ENCODE measurements at regions of chr10 and their contacts with region 1.

Region 1: DNA sequence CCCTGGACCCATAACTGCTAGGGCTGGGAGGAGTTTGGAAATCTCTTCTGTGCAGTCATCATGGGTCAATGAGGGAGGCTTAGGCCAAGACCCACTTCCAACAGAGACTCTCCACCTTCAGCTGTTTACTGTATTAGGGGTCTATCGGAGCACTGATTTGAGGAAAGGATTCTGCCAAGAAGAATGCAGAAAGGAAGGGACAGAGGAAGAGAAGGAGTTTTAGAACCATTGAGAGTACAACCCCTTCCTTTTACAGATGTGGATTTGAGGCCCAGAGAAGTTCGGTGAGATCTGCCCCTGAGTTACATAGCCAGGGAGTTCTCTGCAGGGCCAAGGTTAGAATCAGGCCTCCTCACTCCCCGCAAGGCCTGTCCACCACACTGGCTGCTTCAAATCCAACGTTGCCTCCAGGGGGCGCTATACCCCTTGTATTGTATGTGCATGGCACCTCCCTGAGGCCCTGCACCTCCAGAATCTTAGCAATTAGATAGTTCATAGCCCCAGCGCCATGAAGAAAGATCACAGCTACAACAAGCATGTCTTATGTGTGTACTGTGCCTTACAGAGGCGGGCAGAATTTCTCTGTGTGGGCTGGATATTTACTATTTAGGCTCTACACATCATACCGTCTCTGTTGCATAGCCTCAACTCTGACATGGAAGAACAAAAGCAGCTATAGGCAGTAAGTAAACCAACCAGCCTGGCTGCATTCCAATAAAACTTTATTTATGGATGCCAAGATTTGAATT is 246.8 kb downstream of the SKIDA1 start:
- DNase-seq: peak; percentile 89
- ATAC-seq: peak; percentile 98
- H3K4me3 ChIP-seq: no peak overlapping the region
- H3K27ac ChIP-seq: no peak overlapping the region
- H3K4me1 ChIP-seq: peaks cover 8 to 32% of the 10 kb centered on the region in 2 experiments; a peak in 3 of 4 replicates
- H3K27me3 ChIP-seq: no peaks in the 10 kb centered on the region
- CTCF ChIP-seq: peak; percentile 82 to 96 (median 85)
- POLR2A ChIP-seq: no peak
- RAD21 ChIP-seq: peak; percentile 97

Region 2: GRCh38 chr10:21364196-21365114 is 85.8 kb after region 1 on chr10:
- CTCF ChIA-PET with region 1: no interaction called
- POLR2A ChIA-PET with region 1: no interaction called
- RAD21 ChIA-PET with region 1: no interaction called
- intact Hi-C with region 1: loop called (anchors 5 kb)
- DNase-seq: peak; percentile 94
- ATAC-seq: peak; percentile 86
- H3K4me3 ChIP-seq: peak overlapping the region in 1 of 2 experiments; percentile 35; a peak in 2 of 4 replicates
- H3K27ac ChIP-seq: peak overlapping the region; percentile 91
- H3K4me1 ChIP-seq: peaks cover 52 to 71% of the 10 kb centered on the region in 2 experiments
- H3K27me3 ChIP-seq: no peaks in the 10 kb centered on the region
- CTCF ChIP-seq: no peak
- POLR2A ChIP-seq: no peak
- RAD21 ChIP-seq: no peak; the same call in 1 of the 2 replicates

Region 3: DNA sequence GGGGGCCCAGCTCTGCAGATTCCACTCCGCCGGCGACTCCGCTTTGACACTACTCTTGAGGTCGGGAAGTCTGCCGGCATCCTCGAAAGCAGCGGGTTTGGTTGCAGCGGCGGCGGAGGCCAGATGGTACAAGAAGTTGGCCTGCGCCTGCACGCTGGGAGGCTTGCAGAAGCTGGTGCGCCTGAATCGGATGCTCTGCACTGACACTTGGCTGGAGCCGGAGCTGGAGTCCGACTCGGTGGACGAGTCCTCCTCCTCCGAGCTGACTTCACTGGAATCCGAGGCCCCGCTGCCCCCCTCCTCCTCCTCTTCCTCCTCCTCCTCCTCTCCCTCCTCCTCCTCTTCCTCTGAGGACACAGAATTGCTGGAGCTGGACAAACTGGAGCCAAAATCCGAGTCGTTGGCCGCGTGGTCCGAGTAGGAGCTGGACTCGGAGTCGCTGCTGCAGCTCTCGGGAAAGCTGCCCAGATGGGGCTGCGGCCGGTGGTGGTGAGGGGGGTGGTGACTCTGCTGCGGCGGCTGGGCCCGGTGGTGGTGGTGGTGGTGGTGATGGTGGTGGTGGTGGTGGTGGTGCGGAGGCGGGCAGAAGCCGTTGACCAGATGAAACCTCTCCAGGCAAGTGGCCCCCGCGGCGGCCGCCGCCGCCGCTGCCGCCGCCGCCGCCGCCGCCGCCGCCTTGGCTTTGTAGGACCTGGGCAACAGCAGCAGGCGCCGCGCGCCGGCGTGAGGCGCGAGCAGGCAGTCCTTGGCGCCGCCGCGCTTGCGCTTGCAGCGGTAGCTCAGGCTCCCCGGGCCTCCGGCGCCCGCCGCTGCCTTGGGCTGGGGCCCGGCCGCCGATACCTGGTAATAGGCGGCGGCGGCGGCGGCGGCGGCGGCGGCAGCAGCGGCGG is 237.8 kb after region 1 on chr10:
- CTCF ChIA-PET with region 1: no interaction called
- POLR2A ChIA-PET with region 1: no interaction called
- RAD21 ChIA-PET with region 1: no interaction called
- intact Hi-C with region 1: loop called (anchors 5 kb)
- DNase-seq: no peak
- ATAC-seq: peak; percentile 67
- H3K4me3 ChIP-seq: peak overlapping the region; percentile 51 to 63
- H3K27ac ChIP-seq: peak overlapping the region; percentile 47; the same call in 1 of the 2 replicates
- H3K4me1 ChIP-seq: peaks cover 13 to 30% of the 10 kb centered on the region in 2 experiments; a peak in 3 of 4 replicates
- H3K27me3 ChIP-seq: no peaks in the 10 kb centered on the region
- CTCF ChIP-seq: no peak
- POLR2A ChIP-seq: no peak
- RAD21 ChIP-seq: no peak

Region 4: DNA sequence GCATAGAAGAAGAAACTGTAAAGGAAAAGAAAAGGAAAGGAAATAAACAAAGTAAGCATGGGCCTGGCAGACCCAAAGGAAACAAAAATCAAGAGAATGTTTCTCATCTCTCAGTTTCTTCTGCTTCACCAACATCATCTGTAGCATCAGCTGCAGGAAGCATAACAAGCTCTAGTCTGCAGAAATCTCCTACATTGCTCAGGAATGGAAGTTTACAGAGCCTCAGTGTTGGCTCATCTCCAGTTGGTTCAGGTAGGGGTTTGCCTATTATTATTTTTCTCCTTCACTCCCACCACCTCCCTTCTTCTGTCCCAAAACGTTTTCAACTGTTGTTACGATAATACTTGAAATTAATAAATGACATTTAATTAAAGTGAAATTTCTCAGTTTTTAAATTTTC is 395.0 kb after region 1 on chr10:
- CTCF ChIA-PET with region 1: no interaction called
- POLR2A ChIA-PET with region 1: no interaction called
- RAD21 ChIA-PET with region 1: no interaction called
- intact Hi-C with region 1: loop called (anchors 5 kb)
- DNase-seq: no peak
- ATAC-seq: no peak
- H3K4me3 ChIP-seq: no peak overlapping the region
- H3K27ac ChIP-seq: no peak overlapping the region
- H3K4me1 ChIP-seq: no peaks in the 10 kb centered on the region
- H3K27me3 ChIP-seq: no peaks in the 10 kb centered on the region
- CTCF ChIP-seq: no peak
- POLR2A ChIP-seq: no peak
- RAD21 ChIP-seq: no peak

Region 5: GRCh38 chr10:21953585-21954057 is 675.0 kb after region 1 on chr10:
- CTCF ChIA-PET with region 1: interaction called, 6 read pairs
- POLR2A ChIA-PET with region 1: no interaction called
- RAD21 ChIA-PET with region 1: no interaction called
- intact Hi-C with region 1: loop called (anchors 1 kb)
- DNase-seq: peak; percentile 53
- ATAC-seq: peak; percentile 72
- H3K4me3 ChIP-seq: no peak overlapping the region
- H3K27ac ChIP-seq: no peak overlapping the region
- H3K4me1 ChIP-seq: peaks cover 0 to 4% of the 10 kb centered on the region in 2 experiments; a peak in 1 of 4 replicates
- H3K27me3 ChIP-seq: no peaks in the 10 kb centered on the region
- CTCF ChIP-seq: peak; percentile 25 to 61 (median 50); a peak in 4 of 6 replicates
- POLR2A ChIP-seq: no peak
- RAD21 ChIP-seq: peak; percentile 65

Measured in HCT116 (cell line).